Colonic mucosa (tissue), 4 donors: ENCODE measurements at regions of chr10 and their contacts with region 1.

Region 1: GRCh38 chr10:96395931-96396877 is 37.4 kb upstream of the OPALIN start:
- DNase-seq: peak; percentile 53
- H3K4me3 ChIP-seq: no peak overlapping the region
- H3K27ac ChIP-seq: no peak overlapping the region
- H3K4me1 ChIP-seq: no peaks in the 10 kb centered on the region
- H3K27me3 ChIP-seq: peaks cover 9% of the 10 kb centered on the region
- CTCF ChIP-seq: peak; percentile 89

Region 2: GRCh38 chr10:96491299-96491698 is 95.1 kb after region 1 on chr10:
- intact Hi-C with region 1: no loop called
- DNase-seq: no peak
- H3K4me3 ChIP-seq: no peak overlapping the region
- H3K27ac ChIP-seq: no peak overlapping the region
- H3K4me1 ChIP-seq: no peaks in the 10 kb centered on the region
- H3K27me3 ChIP-seq: no peaks in the 10 kb centered on the region
- CTCF ChIP-seq: no peak

Region 3: GRCh38 chr10:96511044-96511945 is 115.1 kb after region 1 on chr10:
- intact Hi-C with region 1: loop called (anchors 2 kb)
- DNase-seq: peak; percentile 67
- H3K4me3 ChIP-seq: no peak overlapping the region
- H3K27ac ChIP-seq: no peak overlapping the region
- H3K4me1 ChIP-seq: peaks cover 11% of the 10 kb centered on the region
- H3K27me3 ChIP-seq: peaks cover 12% of the 10 kb centered on the region
- CTCF ChIP-seq: peak; percentile 4

Region 4: DNA sequence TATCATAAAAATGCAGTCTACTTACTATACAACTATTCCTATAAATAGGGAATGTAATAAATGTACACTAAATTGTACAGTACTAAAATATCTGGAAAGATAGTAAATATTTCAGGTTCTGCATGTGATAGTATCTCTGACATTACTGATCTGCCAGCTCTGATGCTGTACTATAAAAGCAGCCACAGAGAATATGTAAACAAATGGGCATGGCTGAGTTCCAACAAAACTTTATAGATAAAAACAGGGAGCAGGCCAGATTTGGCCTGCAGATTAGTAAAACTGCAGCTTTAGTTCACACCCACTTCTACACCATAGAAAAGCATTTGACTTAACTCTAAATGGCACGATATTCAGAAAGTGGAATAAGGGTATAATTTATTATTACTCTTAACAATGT is 136.3 kb after region 1 on chr10:
- intact Hi-C with region 1: no loop called
- DNase-seq: peak; percentile 49
- H3K4me3 ChIP-seq: no peak overlapping the region
- H3K27ac ChIP-seq: no peak overlapping the region
- H3K4me1 ChIP-seq: peaks cover 7% of the 10 kb centered on the region
- H3K27me3 ChIP-seq: no peaks in the 10 kb centered on the region
- CTCF ChIP-seq: no peak

Region 5: GRCh38 chr10:96606946-96607345 is 210.7 kb after region 1 on chr10:
- intact Hi-C with region 1: no loop called
- DNase-seq: no peak
- H3K4me3 ChIP-seq: no peak overlapping the region
- H3K27ac ChIP-seq: no peak overlapping the region
- H3K4me1 ChIP-seq: peaks cover 11% of the 10 kb centered on the region
- H3K27me3 ChIP-seq: no peaks in the 10 kb centered on the region
- CTCF ChIP-seq: no peak

Region 6: GRCh38 chr10:96743988-96744585 is 347.9 kb after region 1 on chr10:
- intact Hi-C with region 1: loop called (anchors 10 kb)
- DNase-seq: no peak
- H3K4me3 ChIP-seq: no peak overlapping the region
- H3K27ac ChIP-seq: no peak overlapping the region
- H3K4me1 ChIP-seq: peaks cover 6% of the 10 kb centered on the region
- H3K27me3 ChIP-seq: no peaks in the 10 kb centered on the region
- CTCF ChIP-seq: no peak